ENCODE measurements at regions of chr9 and their contacts with region 1.

Region 1: DNA sequence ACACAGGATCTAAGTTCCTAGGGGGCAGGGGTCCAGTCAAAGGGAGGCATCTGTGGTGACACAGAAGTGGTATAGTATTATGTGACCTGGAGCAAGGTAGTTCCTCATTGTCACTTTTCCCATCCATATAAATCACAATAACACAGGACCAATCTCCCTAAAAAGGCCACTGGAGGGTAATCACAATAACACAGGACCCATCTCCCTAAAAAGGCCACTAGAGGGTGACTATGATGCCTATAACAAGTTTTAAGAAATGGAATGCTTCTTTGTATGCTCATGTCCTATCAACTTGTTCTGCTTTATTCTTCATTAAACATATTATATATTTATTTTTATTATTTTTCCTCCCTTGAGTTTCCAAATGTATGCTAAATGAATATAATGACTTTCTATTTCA is 254.6 kb downstream of the ASTN2 start:
- DNase-seq: no peak
- ATAC-seq: no peak
- H3K4me3 Mint-ChIP-seq: no peak overlapping the region
- H3K27ac Mint-ChIP-seq: no peak overlapping the region
- H3K4me1 Mint-ChIP-seq: no peaks in the 10 kb centered on the region
- H3K27me3 Mint-ChIP-seq: no peaks in the 10 kb centered on the region

Region 2: DNA sequence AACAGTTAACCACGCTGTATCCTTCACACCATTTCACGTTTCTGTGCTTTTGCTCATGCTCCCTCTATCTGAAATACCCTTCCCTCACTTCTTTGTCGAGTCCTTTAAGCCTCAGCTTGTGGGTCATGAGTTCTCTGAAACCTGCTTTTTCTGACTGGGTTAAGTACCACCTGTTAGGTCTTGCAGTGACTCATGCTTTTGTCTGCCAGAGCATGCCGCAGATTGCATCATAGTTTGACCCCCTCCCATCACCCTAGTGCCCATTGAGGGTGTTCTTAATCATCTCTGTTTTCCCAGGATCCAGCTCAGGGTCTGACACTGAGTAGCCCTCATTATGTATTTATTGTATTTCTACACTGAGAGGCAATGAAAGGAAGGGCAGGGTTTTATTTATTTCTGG is 64.4 kb after region 1 on chr9:
- CTCF ChIA-PET with region 1: no interaction called
- POLR2A ChIA-PET with region 1: no interaction called
- intact Hi-C with region 1: loop called in 1 of 2 experiments (anchors 10 kb)
- DNase-seq: no peak
- ATAC-seq: no peak
- H3K4me3 Mint-ChIP-seq: no peak overlapping the region
- H3K27ac Mint-ChIP-seq: no peak overlapping the region
- H3K4me1 Mint-ChIP-seq: no peaks in the 10 kb centered on the region
- H3K27me3 Mint-ChIP-seq: no peaks in the 10 kb centered on the region

Measured in activated CD4-positive, alpha-beta T cell treated with anti-CD3 and anti-CD28 coated beads for 36 hours (primary cell).